Mammary epithelial cell (primary cell): ENCODE measurements at regions of chr2 and their contacts with region 1.

Region 1: DNA sequence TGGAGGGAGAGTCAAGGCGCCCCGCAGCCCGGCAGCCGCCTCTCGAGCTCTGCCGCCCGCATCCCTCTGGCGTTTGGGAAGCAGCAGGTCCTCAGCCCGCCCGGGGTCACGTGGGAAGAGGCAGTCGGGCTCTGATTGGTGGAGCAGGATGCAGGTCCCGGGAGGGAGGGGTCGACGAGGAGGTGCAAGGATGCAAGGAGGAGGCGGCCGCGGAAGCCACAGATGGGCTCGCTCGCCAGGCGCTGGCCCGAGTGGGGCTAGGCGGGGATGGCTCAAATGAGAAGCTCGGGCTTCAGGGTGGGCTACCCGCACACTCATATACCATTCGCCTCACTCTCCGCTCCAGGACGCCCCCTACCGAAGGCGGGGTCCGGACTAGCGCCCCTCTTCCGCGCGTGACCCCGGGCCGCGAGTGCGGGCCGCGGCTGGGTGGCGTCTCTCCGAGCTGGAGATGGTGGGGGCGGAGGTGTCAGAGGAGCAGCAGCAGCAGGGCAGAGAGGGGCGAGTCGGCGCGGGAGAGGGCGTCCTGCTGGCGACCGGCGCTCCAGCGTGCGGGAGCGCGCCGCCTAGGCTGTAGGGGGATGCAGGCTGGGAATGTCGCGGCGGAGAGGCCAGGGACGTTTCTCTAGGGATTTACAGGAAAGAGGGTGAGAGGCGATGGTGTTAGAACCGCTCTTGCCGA is at the start of gene TMEFF2:
- DNase-seq: peak; percentile 6
- H3K4me3 ChIP-seq: peak within 1 kb of the TSS; percentile 22 to 39 (median 24)
- H3K27ac ChIP-seq: no peak within 1 kb of the TSS
- H3K4me1 ChIP-seq: peaks cover 16% of the 10 kb centered on the region
- H3K27me3 ChIP-seq: peaks cover 44% of the 10 kb centered on the region
- CTCF ChIP-seq: no peak
- total RNA-seq, gene TMEFF2: not detected

Region 2: DNA sequence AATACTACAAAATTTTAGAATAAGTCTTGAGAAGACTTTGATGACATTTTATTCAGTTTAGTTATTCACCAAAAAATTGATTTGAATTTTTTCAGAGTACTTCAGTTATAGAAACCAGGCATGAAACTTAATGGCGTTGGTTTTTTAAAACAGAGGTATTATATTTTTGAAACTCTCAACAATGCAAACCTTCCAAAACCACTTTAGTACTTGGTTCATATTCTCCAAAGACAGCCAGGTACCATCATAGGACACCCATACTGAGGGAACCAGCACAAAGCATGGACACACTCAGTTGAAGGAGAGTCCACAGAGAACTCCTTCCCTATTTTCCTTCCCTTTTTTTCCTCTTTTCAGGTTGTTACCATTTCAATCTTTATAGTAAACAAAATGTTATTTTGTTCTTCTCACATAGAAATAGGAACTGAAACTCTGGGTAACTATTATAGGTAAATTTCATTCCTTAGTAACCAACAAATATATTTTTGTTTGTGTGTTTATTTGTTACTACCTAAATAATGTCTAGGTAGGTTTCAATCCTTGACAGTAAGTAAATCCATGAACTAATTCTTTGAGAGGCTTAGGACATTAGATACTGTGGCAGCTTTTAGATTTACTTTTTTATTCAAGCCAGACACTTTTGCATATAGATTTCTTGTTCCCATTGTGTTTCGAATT is 96.1 kb before region 1 on chr2:
- CTCF ChIA-PET with region 1: no interaction called
- dilution Hi-C with region 1: no loop called
- in situ Hi-C with region 1: no loop called
- intact Hi-C with region 1: no loop called
- DNase-seq: no peak
- H3K4me3 ChIP-seq: no peak overlapping the region
- H3K27ac ChIP-seq: no peak overlapping the region
- H3K4me1 ChIP-seq: no peaks in the 10 kb centered on the region
- H3K27me3 ChIP-seq: peaks cover 1% of the 10 kb centered on the region
- CTCF ChIP-seq: no peak

Region 3: GRCh38 chr2:192286093-192286701 is 91.2 kb after region 1 on chr2:
- CTCF ChIA-PET with region 1: no interaction called
- dilution Hi-C with region 1: no loop called
- in situ Hi-C with region 1: loop called in 1 of 2 experiments (anchors 25 kb)
- intact Hi-C with region 1: loop called (anchors 1 kb)
- DNase-seq: peak; percentile 35
- H3K4me3 ChIP-seq: no peak overlapping the region
- H3K27ac ChIP-seq: no peak overlapping the region
- H3K4me1 ChIP-seq: no peaks in the 10 kb centered on the region
- H3K27me3 ChIP-seq: no peaks in the 10 kb centered on the region
- CTCF ChIP-seq: peak; percentile 59 to 81

Region 4: DNA sequence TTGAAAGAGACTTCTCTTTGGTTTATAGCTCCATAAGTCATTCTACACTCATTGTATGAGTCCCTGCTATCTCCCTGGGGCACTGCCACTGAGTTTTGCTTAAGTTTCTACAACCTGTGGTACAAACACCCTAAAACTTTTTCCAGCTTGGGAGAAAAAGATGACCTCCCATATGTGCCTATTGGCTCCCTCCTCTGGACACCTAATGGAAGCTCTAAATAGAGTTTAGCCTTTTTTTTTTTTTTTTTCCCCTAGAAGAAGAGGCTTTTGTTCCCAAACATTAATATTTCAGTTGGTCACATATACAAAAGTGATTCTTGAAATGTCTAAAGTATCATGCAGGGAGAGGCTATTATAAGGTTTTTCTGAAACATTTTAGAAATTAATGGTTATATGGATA is 546.9 kb after region 1 on chr2:
- CTCF ChIA-PET with region 1: interaction called, 10 read pairs
- dilution Hi-C with region 1: no loop called
- in situ Hi-C with region 1: no loop called
- intact Hi-C with region 1: no loop called
- DNase-seq: no peak
- H3K4me3 ChIP-seq: no peak overlapping the region
- H3K27ac ChIP-seq: no peak overlapping the region
- H3K4me1 ChIP-seq: no peaks in the 10 kb centered on the region
- H3K27me3 ChIP-seq: no peaks in the 10 kb centered on the region
- CTCF ChIP-seq: peak; percentile 31 to 51